Caco-2 (cell line): ENCODE measurements at regions of chr3 and their contacts with region 1.

Region 1: GRCh38 chr3:152574461-152575079 is 260.4 kb upstream of the P2RY1 start:
- DNase-seq: peak in 1 of 2 experiments; percentile 44
- H3K4me3 ChIP-seq: no peak overlapping the region
- H3K4me3 Mint-ChIP-seq: no peak overlapping the region
- H3K27ac Mint-ChIP-seq: no peak overlapping the region
- H3K4me1 ChIP-seq: no peaks in the 10 kb centered on the region
- H3K4me1 Mint-ChIP-seq: no peaks in the 10 kb centered on the region
- H3K27me3 ChIP-seq: no peaks in the 10 kb centered on the region
- H3K27me3 Mint-ChIP-seq: peaks cover 3% of the 10 kb centered on the region
- CTCF ChIP-seq: peak; percentile 48 to 63

Region 2: GRCh38 chr3:152149832-152150231 is 424.7 kb before region 1 on chr3:
- CTCF ChIA-PET with region 1: no interaction called
- POLR2A ChIA-PET with region 1: no interaction called
- intact Hi-C with region 1: no loop called
- DNase-seq: no peak
- H3K4me3 ChIP-seq: no peak overlapping the region
- H3K4me3 Mint-ChIP-seq: no peak overlapping the region
- H3K27ac Mint-ChIP-seq: no peak overlapping the region
- H3K4me1 ChIP-seq: no peaks in the 10 kb centered on the region; the same call in 1 of the 2 replicates
- H3K4me1 Mint-ChIP-seq: peaks cover 15% of the 10 kb centered on the region
- H3K27me3 ChIP-seq: no peaks in the 10 kb centered on the region
- H3K27me3 Mint-ChIP-seq: no peaks in the 10 kb centered on the region
- CTCF ChIP-seq: no peak

Region 3: GRCh38 chr3:152466784-152467183 is 107.8 kb before region 1 on chr3:
- CTCF ChIA-PET with region 1: interaction called, 3 read pairs
- POLR2A ChIA-PET with region 1: no interaction called
- intact Hi-C with region 1: loop called (anchors 2 kb)
- DNase-seq: peak in 1 of 2 experiments; percentile 37
- H3K4me3 ChIP-seq: no peak overlapping the region
- H3K4me3 Mint-ChIP-seq: no peak overlapping the region
- H3K27ac Mint-ChIP-seq: no peak overlapping the region
- H3K4me1 ChIP-seq: no peaks in the 10 kb centered on the region
- H3K4me1 Mint-ChIP-seq: peaks cover 6% of the 10 kb centered on the region
- H3K27me3 ChIP-seq: no peaks in the 10 kb centered on the region
- H3K27me3 Mint-ChIP-seq: no peaks in the 10 kb centered on the region
- CTCF ChIP-seq: peak; percentile 40 to 52

Region 4: GRCh38 chr3:152471814-152472671 is 102.5 kb before region 1 on chr3:
- CTCF ChIA-PET with region 1: interaction called, 3 read pairs
- POLR2A ChIA-PET with region 1: no interaction called
- intact Hi-C with region 1: loop called (anchors 1 kb)
- DNase-seq: peak in 1 of 2 experiments; percentile 49
- H3K4me3 ChIP-seq: no peak overlapping the region
- H3K4me3 Mint-ChIP-seq: no peak overlapping the region
- H3K27ac Mint-ChIP-seq: no peak overlapping the region
- H3K4me1 ChIP-seq: no peaks in the 10 kb centered on the region; the same call in 1 of the 2 replicates
- H3K4me1 Mint-ChIP-seq: peaks cover 6% of the 10 kb centered on the region
- H3K27me3 ChIP-seq: no peaks in the 10 kb centered on the region
- H3K27me3 Mint-ChIP-seq: no peaks in the 10 kb centered on the region
- CTCF ChIP-seq: peak; percentile 64 to 68

Region 5: GRCh38 chr3:152508705-152509104 is 65.9 kb before region 1 on chr3:
- CTCF ChIA-PET with region 1: interaction called, 5 read pairs
- POLR2A ChIA-PET with region 1: no interaction called
- intact Hi-C with region 1: loop called (anchors 1 kb)
- DNase-seq: peak in 1 of 2 experiments; percentile 24
- H3K4me3 ChIP-seq: no peak overlapping the region
- H3K4me3 Mint-ChIP-seq: no peak overlapping the region
- H3K27ac Mint-ChIP-seq: no peak overlapping the region
- H3K4me1 ChIP-seq: no peaks in the 10 kb centered on the region
- H3K4me1 Mint-ChIP-seq: no peaks in the 10 kb centered on the region
- H3K27me3 ChIP-seq: no peaks in the 10 kb centered on the region
- H3K27me3 Mint-ChIP-seq: no peaks in the 10 kb centered on the region
- CTCF ChIP-seq: peak; percentile 22 to 43

Region 6: GRCh38 chr3:152524198-152525140 is 50.1 kb before region 1 on chr3:
- CTCF ChIA-PET with region 1: no interaction called
- POLR2A ChIA-PET with region 1: no interaction called
- intact Hi-C with region 1: loop called (anchors 1 kb)
- DNase-seq: peak in 1 of 2 experiments; percentile 42
- H3K4me3 ChIP-seq: no peak overlapping the region
- H3K4me3 Mint-ChIP-seq: no peak overlapping the region
- H3K27ac Mint-ChIP-seq: no peak overlapping the region
- H3K4me1 ChIP-seq: no peaks in the 10 kb centered on the region
- H3K4me1 Mint-ChIP-seq: no peaks in the 10 kb centered on the region
- H3K27me3 ChIP-seq: no peaks in the 10 kb centered on the region
- H3K27me3 Mint-ChIP-seq: no peaks in the 10 kb centered on the region
- CTCF ChIP-seq: peak; percentile 44 to 73

Region 7: GRCh38 chr3:152745646-152746045 is 171.1 kb after region 1 on chr3:
- CTCF ChIA-PET with region 1: no interaction called
- POLR2A ChIA-PET with region 1: no interaction called
- intact Hi-C with region 1: no loop called
- DNase-seq: no peak
- H3K4me3 ChIP-seq: no peak overlapping the region
- H3K4me3 Mint-ChIP-seq: no peak overlapping the region
- H3K27ac Mint-ChIP-seq: no peak overlapping the region
- H3K4me1 ChIP-seq: no peaks in the 10 kb centered on the region
- H3K4me1 Mint-ChIP-seq: no peaks in the 10 kb centered on the region
- H3K27me3 ChIP-seq: no peaks in the 10 kb centered on the region
- H3K27me3 Mint-ChIP-seq: no peaks in the 10 kb centered on the region
- CTCF ChIP-seq: no peak

Region 8: DNA sequence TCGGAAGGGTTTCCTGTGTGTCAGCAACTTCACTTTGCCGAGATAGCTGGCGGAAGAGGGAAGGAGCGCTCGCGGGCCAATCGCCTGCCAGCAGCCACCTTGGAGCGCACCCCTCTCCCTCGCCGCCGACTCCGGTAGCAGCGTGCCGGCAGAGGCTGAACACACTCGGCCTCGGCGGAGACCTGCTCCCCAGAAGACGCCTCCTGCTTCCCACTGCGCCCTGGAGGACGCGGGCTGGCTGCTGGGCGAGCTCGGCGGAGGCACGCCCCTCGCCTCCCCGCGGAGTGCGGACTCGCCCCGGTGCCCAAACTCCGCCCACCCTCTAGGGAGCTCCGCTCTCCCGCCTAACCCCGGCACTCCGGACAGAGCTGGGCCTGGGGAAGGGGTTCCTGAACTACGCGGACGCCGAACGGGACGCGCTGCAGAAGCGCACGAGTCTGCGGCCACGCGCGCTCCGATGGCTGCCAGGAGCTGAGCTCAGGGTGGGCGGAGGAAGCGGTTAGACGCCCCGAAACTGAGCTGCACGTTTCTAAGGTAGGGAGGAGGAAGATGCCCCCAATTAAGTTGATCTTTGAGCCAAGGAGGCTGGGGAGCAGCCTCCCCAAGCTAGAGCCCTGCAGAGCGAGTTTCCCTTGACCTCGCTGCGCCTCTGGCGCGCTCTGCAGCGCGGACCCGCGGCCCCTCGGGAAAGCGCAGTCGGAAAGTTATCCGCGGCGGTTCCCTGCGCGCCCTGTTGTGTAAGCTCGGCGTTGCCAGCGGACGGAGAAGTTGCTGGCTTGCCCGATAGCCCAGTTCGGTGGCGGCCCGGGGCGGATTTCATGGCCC is 260.4 kb after region 1 on chr3 and contains the start of gene P2RY1:
- CTCF ChIA-PET with region 1: interaction called, 4 read pairs
- POLR2A ChIA-PET with region 1: no interaction called
- intact Hi-C with region 1: loop called (anchors 10 kb)
- DNase-seq: peak; percentile 85 to 86
- H3K4me3 ChIP-seq: peak within 1 kb of the TSS; percentile 70
- H3K4me3 Mint-ChIP-seq: peak within 1 kb of the TSS; percentile 88
- H3K27ac Mint-ChIP-seq: peak within 1 kb of the TSS; percentile 84
- H3K4me1 ChIP-seq: no peaks in the 10 kb centered on the region
- H3K4me1 Mint-ChIP-seq: no peaks in the 10 kb centered on the region
- H3K27me3 ChIP-seq: no peaks in the 10 kb centered on the region
- H3K27me3 Mint-ChIP-seq: no peaks in the 10 kb centered on the region
- CTCF ChIP-seq: peak in 1 of 2 experiments; percentile 44
- total RNA-seq, gene P2RY1: 6.0 and 8.5 TPM in 2 replicates

Region 9: DNA sequence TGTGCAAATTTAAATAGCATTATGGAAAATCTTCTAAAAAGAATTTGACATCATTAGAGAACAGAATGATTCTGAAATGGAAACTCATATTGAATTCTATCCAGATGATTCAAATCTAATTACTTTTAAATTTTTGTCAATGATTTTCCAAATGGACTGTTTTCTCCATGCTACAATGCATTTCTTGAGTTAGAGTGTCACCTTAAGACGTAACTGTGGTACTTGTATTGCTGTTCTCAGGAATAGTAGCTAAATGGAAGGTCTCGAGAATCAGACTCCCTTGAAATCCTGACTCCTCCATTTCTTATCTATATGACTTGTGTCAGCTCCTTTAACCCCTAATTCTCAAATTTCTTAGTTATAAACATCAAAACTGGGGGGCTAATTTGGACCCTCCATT is 362.7 kb after region 1 on chr3:
- CTCF ChIA-PET with region 1: no interaction called
- POLR2A ChIA-PET with region 1: no interaction called
- intact Hi-C with region 1: loop called (anchors 10 kb)
- DNase-seq: no peak
- H3K4me3 ChIP-seq: no peak overlapping the region
- H3K4me3 Mint-ChIP-seq: no peak overlapping the region
- H3K27ac Mint-ChIP-seq: no peak overlapping the region
- H3K4me1 ChIP-seq: peaks cover 8% of the 10 kb centered on the region; the same call in 1 of the 2 replicates
- H3K4me1 Mint-ChIP-seq: peaks cover 14% of the 10 kb centered on the region
- H3K27me3 ChIP-seq: no peaks in the 10 kb centered on the region
- H3K27me3 Mint-ChIP-seq: no peaks in the 10 kb centered on the region
- CTCF ChIP-seq: peak in 1 of 2 experiments; percentile 15